ENCODE measurements at regions of chr4 and their contacts with region 1.

Region 1: GRCh38 chr4:98639523-98639922 is 18.9 kb downstream of the TSPAN5 start:
- DNase-seq: no peak
- H3K4me3 Mint-ChIP-seq: peak overlapping the region; percentile 63
- H3K27ac Mint-ChIP-seq: peak overlapping the region; percentile 82
- H3K4me1 Mint-ChIP-seq: peaks cover 46% of the 10 kb centered on the region
- H3K27me3 Mint-ChIP-seq: no peaks in the 10 kb centered on the region

Region 2: GRCh38 chr4:98482847-98483806 is 156.4 kb before region 1 on chr4:
- CTCF ChIA-PET with region 1: no interaction called
- POLR2A ChIA-PET with region 1: no interaction called
- DNase-seq: peak; percentile 20
- H3K4me3 Mint-ChIP-seq: peak overlapping the region; percentile 2
- H3K27ac Mint-ChIP-seq: peak overlapping the region; percentile 55
- H3K4me1 Mint-ChIP-seq: peaks cover 78% of the 10 kb centered on the region
- H3K27me3 Mint-ChIP-seq: no peaks in the 10 kb centered on the region

Region 3: GRCh38 chr4:98601708-98602107 is 37.8 kb before region 1 on chr4:
- CTCF ChIA-PET with region 1: interaction called, 3 read pairs
- POLR2A ChIA-PET with region 1: interaction called, 10 read pairs
- DNase-seq: peak; percentile 21
- H3K4me3 Mint-ChIP-seq: peak overlapping the region; percentile 15
- H3K27ac Mint-ChIP-seq: peak overlapping the region; percentile 32
- H3K4me1 Mint-ChIP-seq: peaks cover 42% of the 10 kb centered on the region
- H3K27me3 Mint-ChIP-seq: peaks cover 2% of the 10 kb centered on the region

Measured in activated CD4-positive, alpha-beta memory T cell treated with anti-CD3 and anti-CD28 coated beads, Interleukin-2, amount 10 ng/mL, durations not matched to agents 7 days and 5 days (primary cell).